ENCODE measurements at regions of chr7 and their contacts with region 1.

Region 1: GRCh38 chr7:106041140-106041717 is 70.9 kb downstream of the SYPL1 start:
- DNase-seq: no peak
- H3K4me3 Mint-ChIP-seq: no peak overlapping the region
- H3K27ac Mint-ChIP-seq: no peak overlapping the region
- H3K4me1 Mint-ChIP-seq: peaks cover 15% of the 10 kb centered on the region
- H3K27me3 Mint-ChIP-seq: peaks cover 20% of the 10 kb centered on the region

Region 2: GRCh38 chr7:105531792-105532671 is 509.2 kb before region 1 on chr7 and contains the start of gene RINT1:
- intact Hi-C with region 1: loop called (anchors 10 kb)
- DNase-seq: peak; percentile 85
- H3K4me3 Mint-ChIP-seq: peak within 1 kb of the TSS; percentile 93
- H3K27ac Mint-ChIP-seq: peak within 1 kb of the TSS; percentile 95
- H3K4me1 Mint-ChIP-seq: peaks cover 21% of the 10 kb centered on the region
- H3K27me3 Mint-ChIP-seq: peaks cover 1% of the 10 kb centered on the region
- total RNA-seq, gene RINT1: 21.9 and 32.5 TPM in 2 replicates

Region 3: GRCh38 chr7:105759670-105760550 is 281.3 kb before region 1 on chr7:
- intact Hi-C with region 1: loop called (anchors 1 kb)
- DNase-seq: no peak
- H3K4me3 Mint-ChIP-seq: no peak overlapping the region
- H3K27ac Mint-ChIP-seq: no peak overlapping the region
- H3K4me1 Mint-ChIP-seq: peaks cover 26% of the 10 kb centered on the region
- H3K27me3 Mint-ChIP-seq: peaks cover 12% of the 10 kb centered on the region

Region 4: GRCh38 chr7:105924945-105925344 is 116.3 kb before region 1 on chr7:
- intact Hi-C with region 1: loop called (anchors 5 kb)
- DNase-seq: no peak
- H3K4me3 Mint-ChIP-seq: no peak overlapping the region
- H3K27ac Mint-ChIP-seq: peak overlapping the region; percentile 56
- H3K4me1 Mint-ChIP-seq: peaks cover 18% of the 10 kb centered on the region
- H3K27me3 Mint-ChIP-seq: peaks cover 12% of the 10 kb centered on the region

Region 5: DNA sequence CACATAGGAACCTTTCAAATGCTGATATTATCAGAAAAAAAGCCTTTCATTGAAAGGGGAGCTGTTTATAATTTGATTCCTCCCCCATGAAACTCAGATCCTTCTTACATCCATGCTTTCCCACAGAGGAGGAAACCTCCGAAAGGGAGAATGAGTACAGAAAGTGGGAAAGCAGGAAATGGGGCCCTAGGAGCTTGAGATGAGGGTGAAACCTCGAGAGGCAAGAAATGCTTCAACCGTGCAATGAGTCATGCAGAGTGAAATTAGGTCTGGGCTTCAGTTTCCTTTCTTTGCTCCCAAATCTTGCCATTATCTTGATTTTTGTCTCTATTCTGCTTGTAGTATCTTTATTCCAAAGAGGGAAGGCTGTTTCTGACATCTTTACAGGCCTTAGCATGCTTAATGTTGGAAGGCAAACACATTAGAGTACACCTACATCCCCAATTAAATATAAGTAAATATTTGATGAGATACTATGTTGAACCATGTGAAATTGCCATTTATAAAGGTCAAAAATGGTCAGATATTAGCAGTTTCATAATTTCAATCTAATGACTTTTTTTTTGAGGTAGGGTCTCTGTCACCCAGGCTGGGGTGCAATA is 164.5 kb after region 1 on chr7:
- intact Hi-C with region 1: no loop called
- DNase-seq: no peak
- H3K4me3 Mint-ChIP-seq: no peak overlapping the region
- H3K27ac Mint-ChIP-seq: no peak overlapping the region
- H3K4me1 Mint-ChIP-seq: peaks cover 6% of the 10 kb centered on the region
- H3K27me3 Mint-ChIP-seq: peaks cover 22% of the 10 kb centered on the region